Activated CD4-positive, alpha-beta T cell treated with anti-CD3 and anti-CD28 coated beads for 36 hours (primary cell): ENCODE measurements at regions of chr1 and their contacts with region 1.

Region 1: GRCh38 chr1:22025368-22026155 is 24.1 kb downstream of the CELA3A start:
- DNase-seq: peak; percentile 94
- ATAC-seq: peak; percentile 74
- H3K4me3 Mint-ChIP-seq: peak overlapping the region; percentile 82
- H3K27ac Mint-ChIP-seq: peak overlapping the region; percentile 99
- H3K4me1 Mint-ChIP-seq: peaks cover 59% of the 10 kb centered on the region
- H3K27me3 Mint-ChIP-seq: no peaks in the 10 kb centered on the region

Region 2: GRCh38 chr1:21766210-21766609 is 259.4 kb before region 1 on chr1:
- CTCF ChIA-PET with region 1: no interaction called
- POLR2A ChIA-PET with region 1: no interaction called
- intact Hi-C with region 1: loop called in 1 of 2 experiments (anchors 1 kb)
- DNase-seq: peak; percentile 21
- ATAC-seq: peak; percentile 87
- H3K4me3 Mint-ChIP-seq: no peak overlapping the region
- H3K27ac Mint-ChIP-seq: peak overlapping the region; percentile 68
- H3K4me1 Mint-ChIP-seq: peaks cover 65% of the 10 kb centered on the region
- H3K27me3 Mint-ChIP-seq: no peaks in the 10 kb centered on the region

Region 3: GRCh38 chr1:22039594-22040285 is 14.2 kb after region 1 on chr1:
- CTCF ChIA-PET with region 1: interaction called, 14 read pairs
- POLR2A ChIA-PET with region 1: interaction called, 34 read pairs
- intact Hi-C with region 1: loop called (anchors 1 kb)
- DNase-seq: peak; percentile 94
- ATAC-seq: peak; percentile 98
- H3K4me3 Mint-ChIP-seq: peak overlapping the region; percentile 64
- H3K27ac Mint-ChIP-seq: peak overlapping the region; percentile 97
- H3K4me1 Mint-ChIP-seq: peaks cover 62% of the 10 kb centered on the region
- H3K27me3 Mint-ChIP-seq: no peaks in the 10 kb centered on the region

Region 4: DNA sequence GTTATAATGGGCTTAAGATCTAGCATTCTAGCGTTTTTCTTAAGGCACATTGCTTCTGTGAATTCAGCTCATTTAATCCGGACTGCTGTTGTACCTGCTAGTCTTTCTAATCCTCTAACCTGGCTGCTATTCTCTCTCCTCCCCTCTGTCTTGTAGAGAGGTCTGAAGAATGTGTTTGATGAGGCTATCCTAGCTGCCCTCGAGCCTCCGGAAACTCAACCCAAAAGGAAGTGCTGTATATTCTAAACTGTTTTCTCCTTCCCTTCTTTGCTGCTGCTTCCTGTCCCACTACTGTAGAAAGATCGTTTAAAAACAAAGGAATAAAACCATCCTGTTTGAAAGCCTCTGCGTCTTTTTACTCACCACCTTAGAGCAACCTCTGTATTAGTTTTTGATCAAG is 64.2 kb after region 1 on chr1:
- CTCF ChIA-PET with region 1: interaction called, 8 read pairs
- POLR2A ChIA-PET with region 1: interaction called, 4 read pairs
- intact Hi-C with region 1: loop called (anchors 2 to 5 kb)
- DNase-seq: no peak
- ATAC-seq: no peak
- H3K4me3 Mint-ChIP-seq: peak overlapping the region; percentile 33
- H3K27ac Mint-ChIP-seq: peak overlapping the region; percentile 82
- H3K4me1 Mint-ChIP-seq: peaks cover 91% of the 10 kb centered on the region
- H3K27me3 Mint-ChIP-seq: no peaks in the 10 kb centered on the region

Region 5: GRCh38 chr1:22250724-22251123 is 225.2 kb after region 1 on chr1:
- CTCF ChIA-PET with region 1: no interaction called
- POLR2A ChIA-PET with region 1: no interaction called
- intact Hi-C with region 1: no loop called
- DNase-seq: no peak
- ATAC-seq: no peak
- H3K4me3 Mint-ChIP-seq: no peak overlapping the region
- H3K27ac Mint-ChIP-seq: no peak overlapping the region
- H3K4me1 Mint-ChIP-seq: peaks cover 2% of the 10 kb centered on the region
- H3K27me3 Mint-ChIP-seq: peaks cover 16% of the 10 kb centered on the region

Region 6: GRCh38 chr1:22451702-22452474 is 426.3 kb after region 1 on chr1 and contains the start of gene ZBTB40:
- CTCF ChIA-PET with region 1: no interaction called
- POLR2A ChIA-PET with region 1: no interaction called
- intact Hi-C with region 1: loop called in 1 of 2 experiments (anchors 1 kb)
- DNase-seq: peak; percentile 98
- ATAC-seq: peak; percentile 97
- H3K4me3 Mint-ChIP-seq: peak within 1 kb of the TSS; percentile 94
- H3K27ac Mint-ChIP-seq: peak within 1 kb of the TSS; percentile 90
- H3K4me1 Mint-ChIP-seq: peaks cover 41% of the 10 kb centered on the region
- H3K27me3 Mint-ChIP-seq: no peaks in the 10 kb centered on the region
- total RNA-seq, gene ZBTB40: 12.7 to 13.5 TPM